Panc1 (cell line): ENCODE measurements at regions of chr11 and their contacts with region 1.

Region 1: DNA sequence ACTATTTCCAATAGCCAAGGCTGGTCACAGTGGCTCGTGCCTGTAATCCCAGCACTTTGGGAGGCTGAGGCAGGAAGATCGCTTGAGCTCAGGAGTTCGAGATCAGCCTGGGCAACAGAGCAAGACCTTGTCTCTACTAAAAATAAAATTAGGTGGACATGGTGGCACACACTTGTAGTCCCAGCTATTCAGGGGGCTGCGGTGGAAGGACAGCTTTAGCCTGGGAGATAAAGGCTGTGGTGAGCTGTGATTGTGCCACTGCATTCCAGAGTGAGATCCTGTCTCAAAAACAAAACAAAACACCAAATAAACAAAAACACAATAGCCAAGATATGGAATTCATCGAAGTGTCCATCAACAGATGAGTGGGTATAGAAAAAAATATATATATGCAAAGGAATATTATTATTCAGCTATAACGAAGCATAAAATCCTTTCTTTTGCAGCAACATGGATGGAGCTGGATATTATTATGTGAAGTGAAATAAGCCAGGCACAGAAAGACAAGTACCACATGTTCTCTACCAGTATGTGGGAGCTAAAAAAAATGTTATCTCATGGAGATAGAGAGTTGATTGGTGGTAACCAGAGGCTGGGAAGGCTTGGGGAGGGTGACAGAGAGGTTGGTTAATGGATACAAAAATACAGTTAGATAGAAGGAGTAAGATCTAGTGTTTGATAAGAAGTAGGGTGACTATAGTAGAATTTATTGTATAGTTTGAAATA is 22.6 kb upstream of the DLAT start:
- DNase-seq: no peak
- ATAC-seq: no peak
- H3K4me3 ChIP-seq: no peak overlapping the region
- H3K27ac ChIP-seq: no peak overlapping the region
- H3K4me1 ChIP-seq: no peaks in the 10 kb centered on the region
- H3K27me3 ChIP-seq: no peaks in the 10 kb centered on the region
- CTCF ChIP-seq: no peak

Region 2: GRCh38 chr11:112024773-112025678 is 22.4 kb after region 1 on chr11 and contains the start of gene DLAT:
- CTCF ChIA-PET with region 1: no interaction called
- POLR2A ChIA-PET with region 1: interaction called, 15 read pairs
- in situ Hi-C with region 1: no loop called
- intact Hi-C with region 1: no loop called
- DNase-seq: peak; percentile 72
- ATAC-seq: peak; percentile 96
- H3K4me3 ChIP-seq: peak within 1 kb of the TSS; percentile 88 to 93
- H3K27ac ChIP-seq: peak within 1 kb of the TSS; percentile 98
- H3K4me1 ChIP-seq: peaks cover 10% of the 10 kb centered on the region
- H3K27me3 ChIP-seq: no peaks in the 10 kb centered on the region
- CTCF ChIP-seq: no peak
- total RNA-seq, gene DLAT: 75.9 TPM

Region 3: GRCh38 chr11:112219476-112220232 is 217.0 kb after region 1 on chr11:
- CTCF ChIA-PET with region 1: no interaction called
- POLR2A ChIA-PET with region 1: no interaction called
- in situ Hi-C with region 1: no loop called
- intact Hi-C with region 1: no loop called
- DNase-seq: peak; percentile 78
- ATAC-seq: peak; percentile 98
- H3K4me3 ChIP-seq: no peak overlapping the region
- H3K27ac ChIP-seq: no peak overlapping the region
- H3K4me1 ChIP-seq: 0 out of 2 replicates have a peak, but pooled peaks cover 4% of the 10 kb centered on the region
- H3K27me3 ChIP-seq: no peaks in the 10 kb centered on the region
- CTCF ChIP-seq: peak; percentile 88